ENCODE measurements at regions of chr1 and their contacts with region 1.

Region 1: DNA sequence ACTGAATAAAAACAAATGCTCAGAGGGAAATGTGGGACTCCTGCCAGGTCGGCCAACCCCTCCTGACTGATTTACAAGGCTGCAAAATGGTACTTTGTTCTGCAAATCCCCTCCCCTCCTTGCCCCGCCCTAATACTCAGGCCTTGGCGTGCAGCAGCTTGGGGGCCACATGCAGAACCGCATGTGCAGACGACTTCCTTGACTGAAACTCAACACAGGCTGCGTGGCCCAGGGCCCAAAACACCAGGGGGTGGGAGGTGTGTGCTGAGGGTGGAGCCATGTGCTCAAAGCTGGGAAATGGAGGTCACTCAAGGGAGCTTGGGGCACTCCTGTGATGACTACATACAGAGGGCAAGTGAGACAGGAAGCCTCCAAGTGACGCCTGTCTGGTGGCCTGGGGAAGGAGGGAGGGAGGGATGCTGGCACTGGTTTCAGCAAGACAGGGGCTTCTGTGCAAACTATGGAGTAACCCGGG is 87.2 kb downstream of the MRPL37 start:
- DNase-seq: peak; percentile 45 to 90 (median 74)
- ATAC-seq: peak; percentile 68 to 76
- H3K4me3 Mint-ChIP-seq: peak overlapping the region; percentile 77 to 90 (median 84)
- H3K27ac Mint-ChIP-seq: peak overlapping the region; percentile 94 to 99 (median 98)
- H3K4me1 Mint-ChIP-seq: peaks cover 51 to 96% (median 94%) of the 10 kb centered on the region in 4 donors
- H3K27me3 Mint-ChIP-seq: no peaks in the 10 kb centered on the region

Region 2: DNA sequence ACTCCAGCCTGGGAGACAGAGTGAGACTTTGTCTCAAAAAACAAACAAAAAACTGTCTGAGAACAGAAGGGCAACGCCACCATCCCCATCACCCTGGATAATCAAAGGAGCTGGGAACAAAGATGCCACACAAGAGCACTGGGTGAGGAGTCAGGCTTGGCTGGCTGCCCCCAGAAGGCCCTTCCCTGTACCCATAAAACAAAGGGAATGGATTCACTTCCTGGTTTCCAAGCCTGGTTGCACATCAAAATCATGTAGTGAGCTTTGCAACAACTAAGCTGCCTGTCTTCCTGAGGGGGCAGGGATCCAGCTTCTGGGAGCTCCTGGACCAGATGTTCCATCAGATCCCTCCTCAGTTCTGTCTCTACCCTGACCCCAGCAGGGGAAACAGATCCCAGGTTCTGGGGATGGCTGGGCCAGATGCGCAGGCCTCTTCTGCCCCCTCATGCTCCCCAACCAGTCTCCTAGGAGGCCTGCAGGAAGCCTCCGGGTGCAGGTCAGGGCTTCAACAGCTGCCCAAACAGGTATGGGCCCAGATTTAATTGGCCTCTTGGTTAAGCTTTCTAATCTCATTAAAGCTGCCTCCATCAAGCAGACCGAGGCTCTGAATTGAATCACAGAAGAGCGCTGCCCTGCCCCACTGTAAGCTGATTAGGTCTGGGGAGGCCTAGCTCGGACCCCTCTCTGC is 10.5 kb after region 1 on chr1:
- POLR2A ChIA-PET with region 1: interaction called, 24 read pairs
- DNase-seq: no peak
- ATAC-seq: no peak
- H3K4me3 Mint-ChIP-seq: peak overlapping the region; percentile 19 to 82 (median 60)
- H3K27ac Mint-ChIP-seq: peak overlapping the region; percentile 62 to 95 (median 90)
- H3K4me1 Mint-ChIP-seq: peaks cover 66 to 95% (median 94%) of the 10 kb centered on the region in 4 donors
- H3K27me3 Mint-ChIP-seq: no peaks in the 10 kb centered on the region

Region 3: GRCh38 chr1:54302951-54303843 is 16.0 kb after region 1 on chr1:
- POLR2A ChIA-PET with region 1: interaction called, 24 read pairs
- DNase-seq: peak in 1 of 10 donors; percentile 39
- ATAC-seq: peak; percentile 48 to 65
- H3K4me3 Mint-ChIP-seq: peak overlapping the region; percentile 40 to 85 (median 74)
- H3K27ac Mint-ChIP-seq: peak overlapping the region; percentile 81 to 98 (median 91)
- H3K4me1 Mint-ChIP-seq: peaks cover 66 to 91% (median 85%) of the 10 kb centered on the region in 4 donors
- H3K27me3 Mint-ChIP-seq: no peaks in the 10 kb centered on the region

Region 4: GRCh38 chr1:54310439-54311328 is 23.5 kb after region 1 on chr1:
- POLR2A ChIA-PET with region 1: interaction called, 17 read pairs
- DNase-seq: peak in 1 of 10 donors; percentile 24
- ATAC-seq: peak; percentile 59 to 68
- H3K4me3 Mint-ChIP-seq: peak overlapping the region in 9 of 10 donors; percentile 53 to 85 (median 78)
- H3K27ac Mint-ChIP-seq: peak overlapping the region; percentile 75 to 95 (median 89)
- H3K4me1 Mint-ChIP-seq: peaks cover 51 to 87% (median 77%) of the 10 kb centered on the region in 4 donors
- H3K27me3 Mint-ChIP-seq: no peaks in the 10 kb centered on the region

Region 5: DNA sequence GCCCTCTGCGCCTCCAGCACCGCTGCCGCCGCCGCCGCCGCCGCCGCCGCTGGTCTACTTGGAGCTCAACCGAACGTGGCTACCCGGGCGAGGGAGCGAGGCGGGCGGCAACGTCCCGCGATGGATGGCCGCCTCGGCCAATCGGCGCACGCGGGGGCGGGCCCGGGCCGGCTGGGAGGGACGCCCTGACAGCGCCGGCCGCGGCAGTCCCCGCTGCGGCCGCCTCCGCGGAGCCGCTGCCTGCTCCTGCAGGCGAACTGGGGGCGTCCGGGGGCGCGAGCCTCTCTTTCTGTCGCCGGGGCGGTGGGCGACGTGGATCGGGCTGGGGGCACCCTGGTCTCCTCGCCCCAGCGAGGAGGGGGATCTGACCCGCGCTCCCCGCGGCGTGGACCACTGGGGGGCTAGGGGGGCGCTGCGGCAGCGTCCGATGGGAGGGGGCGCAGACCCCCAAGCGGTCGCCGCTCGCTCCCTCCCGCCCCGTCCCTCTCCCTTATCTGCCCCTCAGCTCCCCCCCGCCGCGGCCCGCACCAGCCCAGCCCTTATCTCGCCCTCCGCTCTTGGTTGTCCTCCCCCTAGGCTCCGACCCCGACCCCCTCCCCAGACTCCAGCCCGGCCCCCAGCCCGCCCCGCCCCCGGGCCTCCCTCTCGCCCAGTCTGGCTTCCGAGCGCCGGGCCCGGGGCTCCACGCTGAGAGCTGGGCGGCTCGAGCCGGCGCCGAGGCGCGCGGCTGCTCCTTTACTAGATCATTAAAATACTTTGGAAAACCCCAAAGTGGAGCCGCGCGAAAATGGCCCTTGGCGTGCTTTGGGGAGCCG is 119.3 kb after region 1 on chr1 and contains the start of gene SSBP3:
- POLR2A ChIA-PET with region 1: interaction called, 12 read pairs
- DNase-seq: peak; percentile 86 to 94 (median 91)
- ATAC-seq: peak; percentile 92
- H3K4me3 Mint-ChIP-seq: peak within 1 kb of the TSS; percentile 88 to 99 (median 94)
- H3K27ac Mint-ChIP-seq: peak within 1 kb of the TSS; percentile 88 to 97 (median 95)
- H3K4me1 Mint-ChIP-seq: peaks cover 38 to 67% (median 62%) of the 10 kb centered on the region in 4 donors
- H3K27me3 Mint-ChIP-seq: no peaks in the 10 kb centered on the region
- polyA plus RNA-seq, gene SSBP3: 16.1 to 19.8 (median 16.7) TPM

Measured in naive thymus-derived CD8-positive, alpha-beta T cell (primary cell).